ENCODE measurements at regions of chr14 and their contacts with region 1.

Region 1: GRCh38 chr14:92737206-92737605 is 11.2 kb downstream of the LGMN start:
- DNase-seq: no peak
- ATAC-seq: no peak
- H3K4me3 ChIP-seq: no peak overlapping the region
- H3K27ac ChIP-seq: peak overlapping the region in 3 of 12 donors; percentile 5 to 32 (median 22)
- H3K4me1 ChIP-seq: peaks cover 0 to 44% (median 9%) of the 10 kb centered on the region in 12 donors
- H3K27me3 ChIP-seq: no peaks in the 10 kb centered on the region
- CTCF ChIP-seq: no peak
- POLR2A ChIP-seq: no peak

Region 2: DNA sequence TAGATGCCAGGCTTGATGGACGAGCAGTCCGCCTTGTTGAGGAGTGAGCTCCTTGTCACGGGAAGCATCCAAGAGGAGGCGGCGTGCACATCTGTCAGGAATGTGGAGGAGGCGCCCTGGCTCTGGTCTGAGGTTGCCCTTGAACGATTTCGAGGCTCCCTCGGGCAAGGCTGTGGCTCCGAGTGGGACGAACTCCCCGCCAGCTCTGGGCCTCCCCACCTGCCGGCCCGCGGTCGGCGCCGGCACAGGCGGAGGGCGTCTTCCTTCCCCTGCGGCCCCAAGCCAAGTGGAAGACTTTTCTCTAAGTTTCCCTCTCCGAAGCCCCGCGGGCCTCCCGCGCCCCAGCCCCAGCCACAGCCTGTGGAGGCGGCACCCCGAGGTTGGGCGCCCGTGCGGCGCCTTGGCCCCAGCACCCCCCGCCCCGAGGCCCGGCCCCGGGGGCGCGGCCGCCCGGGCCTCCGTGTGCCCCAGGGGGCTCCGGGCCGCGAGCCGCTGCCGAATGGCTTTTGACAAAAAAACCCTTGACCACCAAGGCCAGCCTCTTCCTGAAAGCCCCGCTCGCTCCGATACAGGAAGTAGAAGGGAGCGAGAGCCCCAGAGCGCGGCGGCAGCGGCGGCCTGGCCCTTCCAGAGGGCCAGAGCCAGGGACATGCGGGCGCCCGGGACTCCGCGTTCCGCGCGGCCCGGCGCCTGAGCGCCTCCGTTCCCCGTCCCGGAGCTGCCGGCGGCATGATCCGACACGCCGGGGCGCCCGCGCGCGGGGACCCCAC is 223.8 kb before region 1 on chr14 and contains the start of gene RIN3:
- intact Hi-C with region 1: no loop called
- DNase-seq: peak; percentile 69 to 88 (median 77)
- ATAC-seq: peak in 3 of 4 donors; percentile 56 to 73 (median 71)
- H3K4me3 ChIP-seq: peak within 1 kb of the TSS; percentile 65 to 94 (median 78)
- H3K27ac ChIP-seq: peak within 1 kb of the TSS; percentile 80 to 95 (median 87)
- H3K4me1 ChIP-seq: peaks cover 0 to 72% (median 25%) of the 10 kb centered on the region in 12 donors
- H3K27me3 ChIP-seq: no peaks in the 10 kb centered on the region
- CTCF ChIP-seq: no peak
- POLR2A ChIP-seq: peak in 1 of 2 donors; percentile 37
- total RNA-seq, gene RIN3: 9.7 to 37.0 (median 14.6) TPM

Region 3: DNA sequence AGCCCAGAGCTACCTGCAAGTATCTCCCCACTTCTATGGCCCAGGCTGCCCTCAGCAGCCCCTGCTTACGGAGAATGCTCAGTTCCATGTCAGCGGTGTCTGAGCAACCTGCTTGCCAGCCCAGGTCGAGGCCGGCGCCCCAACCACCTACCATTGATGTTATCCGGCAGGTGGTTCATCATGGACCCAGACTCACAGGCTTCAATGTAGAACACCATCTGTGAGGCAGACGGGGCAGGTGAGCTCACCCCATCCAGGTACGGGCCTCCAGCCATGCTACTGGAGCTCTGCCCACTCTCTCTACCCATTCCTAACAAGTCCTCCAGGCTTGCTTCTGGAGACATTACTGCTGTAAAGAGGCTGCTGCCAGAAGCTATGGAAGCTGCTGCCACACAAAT is 24.6 kb before region 1 on chr14:
- intact Hi-C with region 1: loop called in 1 of 10 experiments (anchors 2 kb)
- DNase-seq: no peak
- ATAC-seq: peak in 1 of 4 donors; percentile 20
- H3K4me3 ChIP-seq: no peak overlapping the region
- H3K27ac ChIP-seq: no peak overlapping the region
- H3K4me1 ChIP-seq: peaks cover 0 to 6% (median 0%) of the 10 kb centered on the region in 12 donors
- H3K27me3 ChIP-seq: no peaks in the 10 kb centered on the region
- CTCF ChIP-seq: no peak
- POLR2A ChIP-seq: no peak

Measured in heart left ventricle (tissue), 16 donors.